B cell (primary cell): ENCODE measurements at regions of chr6 and their contacts with region 1.

Region 1: GRCh38 chr6:99568103-99568933 is at the start of gene CCNC:
- DNase-seq: peak; percentile 93
- ATAC-seq: peak; percentile 96
- H3K4me3 ChIP-seq: peak within 1 kb of the TSS; percentile 53 to 97 (median 90)
- H3K4me3 Mint-ChIP-seq: peak within 1 kb of the TSS; percentile 95
- H3K27ac ChIP-seq: peak within 1 kb of the TSS; percentile 78 to 87
- H3K27ac Mint-ChIP-seq: peak within 1 kb of the TSS; percentile 93
- H3K4me1 ChIP-seq: peaks cover 10 to 14% of the 10 kb centered on the region in 2 donors
- H3K4me1 Mint-ChIP-seq: peaks cover 31% of the 10 kb centered on the region
- H3K27me3 ChIP-seq: no peaks in the 10 kb centered on the region
- H3K27me3 Mint-ChIP-seq: no peaks in the 10 kb centered on the region
- CTCF ChIP-seq: no peak
- total RNA-seq, gene CCNC: 45.1 and 47.9 TPM in 2 replicates

Region 2: GRCh38 chr6:98834060-98835031 is 734.0 kb before region 1 on chr6 and contains the start of gene POU3F2:
- CTCF ChIA-PET with region 1: no interaction called
- POLR2A ChIA-PET with region 1: no interaction called
- intact Hi-C with region 1: no loop called
- DNase-seq: peak; percentile 79
- ATAC-seq: peak; percentile 86
- H3K4me3 ChIP-seq: peak within 1 kb of the TSS; percentile 48 to 82 (median 59)
- H3K4me3 Mint-ChIP-seq: peak within 1 kb of the TSS; percentile 92
- H3K27ac ChIP-seq: no peak within 1 kb of the TSS
- H3K27ac Mint-ChIP-seq: peak within 1 kb of the TSS; percentile 63
- H3K4me1 ChIP-seq: peaks cover 49 to 60% of the 10 kb centered on the region in 2 donors
- H3K4me1 Mint-ChIP-seq: peaks cover 45% of the 10 kb centered on the region
- H3K27me3 ChIP-seq: peaks cover 0 to 81% (median 69%) of the 10 kb centered on the region in 4 experiments
- H3K27me3 Mint-ChIP-seq: peaks cover 77% of the 10 kb centered on the region
- CTCF ChIP-seq: no peak
- total RNA-seq, gene POU3F2: not detected in 2 replicates

Region 3: GRCh38 chr6:99330159-99330558 is 238.2 kb before region 1 on chr6:
- CTCF ChIA-PET with region 1: no interaction called
- POLR2A ChIA-PET with region 1: no interaction called
- intact Hi-C with region 1: no loop called
- DNase-seq: peak; percentile 72
- ATAC-seq: peak; percentile 76
- H3K4me3 ChIP-seq: no peak overlapping the region
- H3K4me3 Mint-ChIP-seq: no peak overlapping the region
- H3K27ac ChIP-seq: no peak overlapping the region
- H3K27ac Mint-ChIP-seq: no peak overlapping the region
- H3K4me1 ChIP-seq: peaks cover 0 to 3% of the 10 kb centered on the region in 2 donors
- H3K4me1 Mint-ChIP-seq: peaks cover 12% of the 10 kb centered on the region
- H3K27me3 ChIP-seq: peaks cover 0 to 2% (median 1%) of the 10 kb centered on the region in 4 experiments
- H3K27me3 Mint-ChIP-seq: no peaks in the 10 kb centered on the region
- CTCF ChIP-seq: peak; percentile 89

Region 4: DNA sequence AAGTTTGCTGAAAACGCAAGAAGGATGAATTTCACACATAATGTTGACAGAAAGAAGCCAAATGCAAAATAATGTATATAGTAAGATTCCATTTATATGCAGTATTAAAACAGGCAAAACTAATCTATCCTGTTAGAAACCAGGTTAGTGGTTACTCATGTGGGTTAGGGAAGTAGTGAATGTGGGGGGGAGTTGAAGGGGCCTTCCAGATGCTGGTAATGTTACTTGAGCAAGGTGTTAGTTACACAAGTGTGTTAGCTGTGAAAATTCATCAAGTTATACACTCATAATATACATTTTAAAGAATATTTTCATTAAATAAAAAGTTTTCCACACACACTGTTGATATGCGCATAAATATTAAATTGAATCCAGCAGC is 82.9 kb before region 1 on chr6:
- CTCF ChIA-PET with region 1: no interaction called
- POLR2A ChIA-PET with region 1: no interaction called
- intact Hi-C with region 1: loop called (anchors 1 kb)
- DNase-seq: peak; percentile 45
- ATAC-seq: no peak
- H3K4me3 ChIP-seq: peak overlapping the region in 3 of 5 experiments; percentile 10 to 26 (median 26)
- H3K4me3 Mint-ChIP-seq: peak overlapping the region; percentile 71
- H3K27ac ChIP-seq: peak overlapping the region; percentile 77 to 78
- H3K27ac Mint-ChIP-seq: peak overlapping the region; percentile 90
- H3K4me1 ChIP-seq: peaks cover 20 to 26% of the 10 kb centered on the region in 2 donors
- H3K4me1 Mint-ChIP-seq: peaks cover 27% of the 10 kb centered on the region
- H3K27me3 ChIP-seq: no peaks in the 10 kb centered on the region
- H3K27me3 Mint-ChIP-seq: no peaks in the 10 kb centered on the region
- CTCF ChIP-seq: no peak

Region 5: DNA sequence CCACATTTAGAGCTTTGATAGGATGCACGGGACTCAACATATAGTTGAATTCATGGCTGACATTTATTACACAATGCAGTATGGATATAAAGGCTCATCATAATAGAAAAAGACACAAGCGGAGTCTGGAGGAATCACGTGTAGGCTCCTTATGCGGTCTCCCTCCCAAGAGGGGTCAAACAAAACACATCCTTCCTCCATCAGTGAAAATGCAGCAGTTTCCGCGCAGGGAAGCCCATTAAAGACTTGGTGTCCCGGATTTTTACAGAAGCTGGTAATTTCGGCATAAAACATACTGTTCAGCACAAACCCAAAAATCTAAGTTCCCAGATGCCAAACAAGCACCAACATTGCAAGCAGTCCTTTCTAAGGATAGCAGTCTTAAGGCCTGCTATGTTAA is 54.2 kb before region 1 on chr6:
- CTCF ChIA-PET with region 1: interaction called, 14 read pairs
- POLR2A ChIA-PET with region 1: no interaction called
- intact Hi-C with region 1: loop called (anchors 1 kb)
- DNase-seq: peak; percentile 13
- ATAC-seq: no peak
- H3K4me3 ChIP-seq: no peak overlapping the region
- H3K4me3 Mint-ChIP-seq: peak overlapping the region; percentile 86
- H3K27ac ChIP-seq: peak overlapping the region in 1 of 2 donors; percentile 85
- H3K27ac Mint-ChIP-seq: peak overlapping the region; percentile 97
- H3K4me1 ChIP-seq: peaks cover 14 to 15% of the 10 kb centered on the region in 2 donors
- H3K4me1 Mint-ChIP-seq: peaks cover 34% of the 10 kb centered on the region
- H3K27me3 ChIP-seq: no peaks in the 10 kb centered on the region
- H3K27me3 Mint-ChIP-seq: no peaks in the 10 kb centered on the region
- CTCF ChIP-seq: no peak

Region 6: GRCh38 chr6:99520855-99521632 is 47.3 kb before region 1 on chr6:
- CTCF ChIA-PET with region 1: interaction called, 14 read pairs
- POLR2A ChIA-PET with region 1: interaction called, 5 read pairs
- intact Hi-C with region 1: loop called (anchors 1 kb)
- DNase-seq: peak; percentile 79
- ATAC-seq: peak; percentile 86
- H3K4me3 ChIP-seq: peak overlapping the region; percentile 77 to 97 (median 79)
- H3K4me3 Mint-ChIP-seq: peak overlapping the region; percentile 99
- H3K27ac ChIP-seq: peak overlapping the region; percentile 54 to 62
- H3K27ac Mint-ChIP-seq: peak overlapping the region; percentile 98
- H3K4me1 ChIP-seq: peaks cover 11 to 15% of the 10 kb centered on the region in 2 donors
- H3K4me1 Mint-ChIP-seq: peaks cover 39% of the 10 kb centered on the region
- H3K27me3 ChIP-seq: no peaks in the 10 kb centered on the region
- H3K27me3 Mint-ChIP-seq: no peaks in the 10 kb centered on the region
- CTCF ChIP-seq: peak; percentile 96

Region 7: DNA sequence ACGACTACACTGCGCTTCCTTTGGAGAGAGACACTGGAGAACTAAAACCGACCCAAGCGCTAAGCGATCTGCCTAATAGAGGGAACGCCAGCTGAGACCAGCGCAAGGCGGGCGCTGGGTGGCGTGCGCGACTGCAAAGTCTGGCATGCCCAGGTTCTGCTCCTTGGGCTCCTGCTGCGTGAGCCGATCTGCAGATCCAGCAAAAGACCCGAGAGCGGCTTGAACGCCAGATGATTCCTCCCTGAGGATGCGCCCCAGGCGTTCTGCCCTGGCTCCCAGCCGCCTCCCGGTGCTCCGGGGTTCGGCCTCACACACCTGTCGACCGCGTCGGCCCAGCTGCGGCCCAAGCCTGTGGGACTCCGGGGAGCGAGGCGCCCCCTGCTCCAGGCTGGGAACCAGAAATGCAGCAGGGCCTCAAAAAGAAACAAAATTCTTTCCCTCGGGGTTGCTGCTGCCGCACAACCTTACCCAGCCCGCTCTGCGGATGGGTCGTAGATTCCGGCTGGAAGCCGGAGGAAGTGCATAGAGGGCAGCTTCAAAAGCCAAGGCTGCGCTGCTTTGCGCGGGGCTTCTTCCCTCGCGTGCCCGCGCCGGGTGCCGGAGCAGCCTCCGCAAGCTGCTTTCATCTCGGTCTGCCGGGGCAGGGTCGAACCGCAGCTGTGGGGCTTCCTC is 20.4 kb after region 1 on chr6:
- CTCF ChIA-PET with region 1: no interaction called
- POLR2A ChIA-PET with region 1: interaction called, 3 read pairs
- intact Hi-C with region 1: loop called (anchors 1 kb)
- DNase-seq: peak; percentile 76
- ATAC-seq: peak; percentile 76
- H3K4me3 ChIP-seq: peak overlapping the region; percentile 39 to 76 (median 58)
- H3K4me3 Mint-ChIP-seq: peak overlapping the region; percentile 92
- H3K27ac ChIP-seq: no peak overlapping the region
- H3K27ac Mint-ChIP-seq: peak overlapping the region; percentile 70
- H3K4me1 ChIP-seq: peaks cover 29 to 33% of the 10 kb centered on the region in 2 donors
- H3K4me1 Mint-ChIP-seq: peaks cover 30% of the 10 kb centered on the region
- H3K27me3 ChIP-seq: peaks cover 5 to 55% (median 47%) of the 10 kb centered on the region in 4 experiments
- H3K27me3 Mint-ChIP-seq: peaks cover 57% of the 10 kb centered on the region
- CTCF ChIP-seq: peak; percentile 29